Naive thymus-derived CD4-positive, alpha-beta T cell (primary cell): ENCODE measurements at regions of chr7 and their contacts with region 1.

Region 1: DNA sequence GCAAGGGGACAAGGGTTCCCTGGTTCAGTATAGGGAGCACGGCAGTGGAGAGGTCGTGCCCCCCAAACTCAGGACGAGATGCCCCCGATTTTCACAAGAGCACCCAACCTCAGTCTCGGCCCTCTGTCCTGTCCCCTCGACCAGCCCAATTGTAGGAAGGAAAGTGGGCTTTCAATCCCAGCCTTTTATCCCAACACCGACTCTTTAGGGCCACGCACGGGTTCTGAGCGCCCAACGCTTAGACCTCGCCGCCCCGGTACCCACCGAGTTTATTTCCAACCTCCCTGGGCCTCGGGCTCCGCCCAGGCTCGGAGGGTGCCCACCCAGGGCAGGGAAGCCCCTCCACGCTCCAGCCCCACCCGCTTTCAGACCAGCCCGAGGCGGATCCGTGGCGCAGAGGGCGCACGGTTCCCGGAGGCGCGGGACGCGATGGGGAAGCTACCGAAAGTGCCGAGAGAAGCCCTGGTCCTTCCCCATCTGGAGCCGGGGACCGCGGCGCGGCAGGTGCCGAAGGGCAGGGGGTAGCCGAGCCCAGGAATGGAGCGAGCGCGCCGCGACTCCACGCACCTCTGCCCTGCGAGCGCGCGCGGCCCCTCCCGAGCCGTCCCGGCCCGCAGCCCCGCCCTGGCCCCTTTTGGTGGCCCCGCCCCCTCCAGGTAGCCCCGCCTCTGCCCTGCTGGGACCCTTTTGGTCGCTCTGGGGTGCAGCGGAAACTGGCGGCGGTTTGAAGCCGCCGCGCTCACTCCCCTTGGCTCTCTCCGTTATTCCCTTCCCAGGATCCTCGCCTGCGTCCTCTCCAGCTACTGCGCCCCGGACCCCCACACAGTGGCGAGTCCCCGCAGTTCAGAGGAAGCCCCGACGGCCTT is 20.4 kb downstream of the GRID2IP start:
- DNase-seq: peak; percentile 28 to 63 (median 51)
- ATAC-seq: peak; percentile 84
- H3K4me3 ChIP-seq: peak overlapping the region; percentile 55
- H3K4me3 Mint-ChIP-seq: peak overlapping the region; percentile 74 to 87 (median 81)
- H3K27ac ChIP-seq: peak overlapping the region; percentile 51
- H3K27ac Mint-ChIP-seq: peak overlapping the region in 3 of 9 donors; percentile 28 to 65 (median 62)
- H3K4me1 ChIP-seq: peaks cover 0 to 5% of the 10 kb centered on the region in 2 donors
- H3K4me1 Mint-ChIP-seq: peaks cover 7 to 23% (median 14%) of the 10 kb centered on the region in 7 donors
- H3K27me3 ChIP-seq: no peaks in the 10 kb centered on the region
- H3K27me3 Mint-ChIP-seq: peaks cover 8 to 61% (median 18%) of the 10 kb centered on the region in 5 donors

Region 2: GRCh38 chr7:5445981-5446594 is 1084.8 kb before region 1 on chr7:
- CTCF ChIA-PET with region 1: no interaction called
- POLR2A ChIA-PET with region 1: no interaction called
- intact Hi-C with region 1: no loop called
- DNase-seq: no peak
- ATAC-seq: no peak
- H3K4me3 ChIP-seq: no peak overlapping the region
- H3K4me3 Mint-ChIP-seq: no peak overlapping the region
- H3K27ac ChIP-seq: no peak overlapping the region
- H3K27ac Mint-ChIP-seq: no peak overlapping the region
- H3K4me1 ChIP-seq: no peaks in the 10 kb centered on the region
- H3K4me1 Mint-ChIP-seq: peaks cover 0 to 5% (median 0%) of the 10 kb centered on the region in 7 donors
- H3K27me3 ChIP-seq: no peaks in the 10 kb centered on the region
- H3K27me3 Mint-ChIP-seq: peaks cover 0 to 3% (median 0%) of the 10 kb centered on the region in 5 donors

Region 3: GRCh38 chr7:6558837-6559236 is 28.0 kb after region 1 on chr7:
- CTCF ChIA-PET with region 1: interaction called, 3 read pairs
- POLR2A ChIA-PET with region 1: no interaction called
- intact Hi-C with region 1: loop called in 1 of 2 experiments (anchors 1 kb)
- DNase-seq: peak in 3 of 9 donors; percentile 16 to 27 (median 20)
- ATAC-seq: peak; percentile 47
- H3K4me3 ChIP-seq: no peak overlapping the region
- H3K4me3 Mint-ChIP-seq: no peak overlapping the region
- H3K27ac ChIP-seq: no peak overlapping the region
- H3K27ac Mint-ChIP-seq: no peak overlapping the region
- H3K4me1 ChIP-seq: peaks cover 0 to 11% of the 10 kb centered on the region in 2 donors
- H3K4me1 Mint-ChIP-seq: peaks cover 4 to 13% (median 9%) of the 10 kb centered on the region in 7 donors
- H3K27me3 ChIP-seq: no peaks in the 10 kb centered on the region
- H3K27me3 Mint-ChIP-seq: peaks cover 0 to 4% (median 0%) of the 10 kb centered on the region in 5 donors